Activated CD4-positive, alpha-beta T cell treated with anti-CD3 and anti-CD28 coated beads, Interleukin-2, amount 10 ng/mL, durations not matched to agents 7 days and 5 days (primary cell): ENCODE measurements at regions of chr2 and their contacts with region 1.

Region 1: GRCh38 chr2:30436859-30437435 is 10.1 kb upstream of the LCLAT1 start:
- DNase-seq: no peak
- H3K4me3 Mint-ChIP-seq: no peak overlapping the region
- H3K27ac Mint-ChIP-seq: no peak overlapping the region
- H3K4me1 Mint-ChIP-seq: peaks cover 9% of the 10 kb centered on the region
- H3K27me3 Mint-ChIP-seq: no peaks in the 10 kb centered on the region

Region 2: DNA sequence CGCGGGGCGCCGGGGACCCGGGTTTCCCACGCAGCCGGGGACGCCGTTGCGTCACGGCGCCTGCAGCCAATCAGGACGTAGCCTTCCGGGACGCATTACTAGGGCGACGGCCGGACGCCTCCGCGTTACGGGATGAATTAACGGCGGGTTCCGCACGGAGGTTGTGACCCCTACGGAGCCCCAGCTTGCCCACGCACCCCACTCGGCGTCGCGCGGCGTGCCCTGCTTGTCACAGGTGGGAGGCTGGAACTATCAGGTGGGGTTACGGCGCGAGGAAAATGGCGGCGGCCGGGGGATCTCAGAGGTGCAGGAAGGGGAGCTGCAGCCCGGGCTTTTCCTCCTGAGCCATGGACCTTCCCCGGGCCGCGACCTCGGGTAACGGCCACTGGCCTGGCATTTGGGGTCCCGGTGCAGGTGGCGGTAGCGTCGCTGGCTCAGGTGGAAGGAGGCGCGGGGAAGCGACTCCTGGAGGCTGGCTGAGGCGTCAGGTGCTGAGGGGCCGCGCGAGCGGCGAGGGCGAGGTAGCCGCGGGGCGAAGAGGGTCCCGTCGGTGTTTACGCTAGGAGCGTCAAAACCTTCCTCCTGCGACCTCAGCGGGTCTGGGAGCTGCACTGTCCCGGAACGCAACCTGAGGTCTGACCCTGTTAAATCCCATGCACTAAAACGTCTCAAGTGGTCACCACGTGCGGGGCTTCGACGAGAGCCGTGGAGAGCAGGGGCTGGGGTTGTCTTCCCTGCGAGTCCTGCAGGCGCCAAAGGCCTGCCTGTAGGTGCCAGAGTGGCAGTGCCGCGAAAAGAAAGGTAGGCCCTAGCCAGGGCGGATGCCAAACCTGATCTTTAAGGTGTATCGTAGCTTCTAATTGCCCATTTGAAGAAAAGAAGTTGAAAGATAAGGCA is 10.4 kb after region 1 on chr2 and contains the start of gene LCLAT1:
- CTCF ChIA-PET with region 1: interaction called, 10 read pairs
- POLR2A ChIA-PET with region 1: no interaction called
- DNase-seq: peak; percentile 85
- H3K4me3 Mint-ChIP-seq: peak within 1 kb of the TSS; percentile 96
- H3K27ac Mint-ChIP-seq: peak within 1 kb of the TSS; percentile 97
- H3K4me1 Mint-ChIP-seq: peaks cover 24% of the 10 kb centered on the region
- H3K27me3 Mint-ChIP-seq: no peaks in the 10 kb centered on the region
- total RNA-seq, gene LCLAT1: 20.7 to 24.6 TPM